Mammary epithelial cell (primary cell): ENCODE measurements at regions of chr17 and their contacts with region 1.

Region 1: DNA sequence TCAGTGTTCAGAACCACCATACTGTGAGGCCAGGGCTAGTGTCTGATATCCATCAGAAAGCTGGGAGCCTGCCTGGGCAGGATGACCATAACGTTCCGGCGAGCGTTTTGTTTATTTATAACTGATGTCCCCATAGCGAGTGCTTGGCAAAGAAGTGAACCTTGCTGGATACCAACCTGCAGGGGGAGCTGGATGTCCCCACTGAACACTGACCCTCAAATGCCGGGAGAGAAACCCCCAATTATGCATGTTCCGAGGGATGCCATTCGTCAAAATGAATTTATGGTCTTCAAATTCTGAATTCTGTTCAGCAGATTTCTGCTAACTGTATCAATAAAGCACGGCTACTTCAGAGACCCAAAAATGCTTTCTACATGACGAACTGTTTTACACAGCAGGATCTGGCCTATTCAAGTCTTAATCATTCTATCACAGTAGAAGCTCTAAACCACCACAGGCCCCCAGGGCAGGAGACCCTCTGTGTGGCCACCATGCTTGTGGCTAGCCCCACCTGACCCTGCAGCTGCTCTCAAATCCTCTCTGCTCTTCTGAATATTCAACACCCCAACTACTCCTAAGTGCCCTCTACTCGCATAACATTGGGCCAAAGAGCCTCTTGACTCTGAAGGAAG is 15.2 kb downstream of the MED24 start:
- DNase-seq: peak; percentile 38
- H3K4me3 ChIP-seq: no peak overlapping the region
- H3K27ac ChIP-seq: no peak overlapping the region
- H3K4me1 ChIP-seq: peaks cover 3% of the 10 kb centered on the region
- H3K27me3 ChIP-seq: no peaks in the 10 kb centered on the region
- CTCF ChIP-seq: peak; percentile 56 to 68

Region 2: DNA sequence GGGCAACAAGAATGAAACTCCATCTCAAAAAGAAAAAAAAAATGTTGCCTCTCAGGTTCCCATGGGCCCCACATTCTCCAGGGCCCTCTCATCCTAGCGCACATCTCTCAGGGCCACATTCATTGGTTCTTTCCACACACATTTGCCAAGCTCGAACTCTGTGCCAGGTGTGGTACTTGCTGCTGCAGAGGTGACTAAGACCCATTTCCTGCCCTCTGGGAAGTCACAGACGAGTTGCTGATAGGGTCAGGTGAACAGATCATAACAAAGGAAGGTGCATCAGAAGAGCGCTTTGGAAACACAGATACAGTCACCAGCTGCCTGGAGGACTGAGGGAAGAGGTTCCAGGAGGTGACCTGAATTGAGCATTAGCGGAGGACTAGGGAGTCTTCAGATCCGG is 75.2 kb before region 1 on chr17:
- CTCF ChIA-PET with region 1: no interaction called
- dilution Hi-C with region 1: no loop called
- in situ Hi-C with region 1: no loop called
- intact Hi-C with region 1: no loop called
- DNase-seq: peak; percentile 93
- H3K4me3 ChIP-seq: no peak overlapping the region
- H3K27ac ChIP-seq: no peak overlapping the region
- H3K4me1 ChIP-seq: peaks cover 25% of the 10 kb centered on the region
- H3K27me3 ChIP-seq: no peaks in the 10 kb centered on the region
- CTCF ChIP-seq: no peak

Region 3: GRCh38 chr17:40086150-40087044 is 47.4 kb after region 1 on chr17:
- CTCF ChIA-PET with region 1: no interaction called
- dilution Hi-C with region 1: no loop called
- in situ Hi-C with region 1: no loop called
- intact Hi-C with region 1: loop called (anchors 2 kb)
- DNase-seq: no peak
- H3K4me3 ChIP-seq: no peak overlapping the region
- H3K27ac ChIP-seq: no peak overlapping the region
- H3K4me1 ChIP-seq: no peaks in the 10 kb centered on the region
- H3K27me3 ChIP-seq: no peaks in the 10 kb centered on the region
- CTCF ChIP-seq: peak; percentile 54 to 87

Region 4: GRCh38 chr17:40287494-40288369 is 248.7 kb after region 1 on chr17 and contains the start of gene CDC6:
- CTCF ChIA-PET with region 1: no interaction called
- dilution Hi-C with region 1: no loop called
- in situ Hi-C with region 1: no loop called
- intact Hi-C with region 1: no loop called
- DNase-seq: peak; percentile 99
- H3K4me3 ChIP-seq: peak within 1 kb of the TSS; percentile 53 to 84 (median 70)
- H3K27ac ChIP-seq: peak within 1 kb of the TSS; percentile 88
- H3K4me1 ChIP-seq: peaks cover 38% of the 10 kb centered on the region
- H3K27me3 ChIP-seq: no peaks in the 10 kb centered on the region
- CTCF ChIP-seq: no peak
- total RNA-seq, gene CDC6: 5.2 to 61.8 TPM